ENCODE measurements at regions of chr10 and their contacts with region 1.

Region 1: GRCh38 chr10:6445501-6446316 is 134.4 kb downstream of the PRKCQ start:
- DNase-seq: peak; percentile 80
- ATAC-seq: peak; percentile 67
- H3K4me3 Mint-ChIP-seq: no peak overlapping the region
- H3K27ac Mint-ChIP-seq: peak overlapping the region; percentile 0
- H3K4me1 Mint-ChIP-seq: peaks cover 39% of the 10 kb centered on the region
- H3K27me3 Mint-ChIP-seq: no peaks in the 10 kb centered on the region

Region 2: GRCh38 chr10:6473901-6474370 is 28.2 kb after region 1 on chr10:
- CTCF ChIA-PET with region 1: interaction called, 20 read pairs
- POLR2A ChIA-PET with region 1: no interaction called
- DNase-seq: peak; percentile 59
- ATAC-seq: peak; percentile 86
- H3K4me3 Mint-ChIP-seq: peak overlapping the region; percentile 90
- H3K27ac Mint-ChIP-seq: peak overlapping the region; percentile 99
- H3K4me1 Mint-ChIP-seq: peaks cover 64% of the 10 kb centered on the region
- H3K27me3 Mint-ChIP-seq: no peaks in the 10 kb centered on the region

Region 3: GRCh38 chr10:6507311-6507710 is 61.6 kb after region 1 on chr10:
- CTCF ChIA-PET with region 1: no interaction called
- POLR2A ChIA-PET with region 1: no interaction called
- DNase-seq: peak; percentile 67
- ATAC-seq: peak; percentile 82
- H3K4me3 Mint-ChIP-seq: no peak overlapping the region
- H3K27ac Mint-ChIP-seq: peak overlapping the region; percentile 87
- H3K4me1 Mint-ChIP-seq: peaks cover 61% of the 10 kb centered on the region
- H3K27me3 Mint-ChIP-seq: no peaks in the 10 kb centered on the region

Region 4: GRCh38 chr10:6563075-6563474 is 117.4 kb after region 1 on chr10:
- CTCF ChIA-PET with region 1: interaction called, 14 read pairs
- POLR2A ChIA-PET with region 1: no interaction called
- DNase-seq: peak; percentile 67
- ATAC-seq: peak; percentile 82
- H3K4me3 Mint-ChIP-seq: peak overlapping the region; percentile 75
- H3K27ac Mint-ChIP-seq: peak overlapping the region; percentile 92
- H3K4me1 Mint-ChIP-seq: peaks cover 89% of the 10 kb centered on the region
- H3K27me3 Mint-ChIP-seq: no peaks in the 10 kb centered on the region

Region 5: DNA sequence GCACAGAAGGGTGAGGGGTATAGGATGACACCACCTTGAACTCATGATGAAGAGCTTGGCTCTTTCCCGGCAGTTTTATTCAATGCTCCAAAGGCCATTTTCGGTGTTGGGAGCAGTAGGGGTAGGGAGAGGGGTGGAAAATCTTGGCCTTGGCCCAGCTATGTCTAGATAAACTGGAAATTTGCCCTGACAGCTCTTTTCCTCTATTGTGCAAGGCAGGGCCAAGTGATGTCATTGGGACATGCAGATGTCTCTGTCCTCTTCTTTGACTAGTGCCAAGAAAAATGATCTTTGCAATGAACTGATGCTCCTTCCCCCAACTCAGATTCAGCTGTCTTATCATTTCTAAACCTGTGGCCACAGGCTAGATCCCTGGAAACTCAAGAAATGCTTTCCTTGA is 162.1 kb after region 1 on chr10:
- CTCF ChIA-PET with region 1: interaction called, 10 read pairs
- POLR2A ChIA-PET with region 1: no interaction called
- DNase-seq: no peak
- ATAC-seq: no peak
- H3K4me3 Mint-ChIP-seq: no peak overlapping the region
- H3K27ac Mint-ChIP-seq: peak overlapping the region; percentile 87
- H3K4me1 Mint-ChIP-seq: peaks cover 78% of the 10 kb centered on the region
- H3K27me3 Mint-ChIP-seq: no peaks in the 10 kb centered on the region

Region 6: DNA sequence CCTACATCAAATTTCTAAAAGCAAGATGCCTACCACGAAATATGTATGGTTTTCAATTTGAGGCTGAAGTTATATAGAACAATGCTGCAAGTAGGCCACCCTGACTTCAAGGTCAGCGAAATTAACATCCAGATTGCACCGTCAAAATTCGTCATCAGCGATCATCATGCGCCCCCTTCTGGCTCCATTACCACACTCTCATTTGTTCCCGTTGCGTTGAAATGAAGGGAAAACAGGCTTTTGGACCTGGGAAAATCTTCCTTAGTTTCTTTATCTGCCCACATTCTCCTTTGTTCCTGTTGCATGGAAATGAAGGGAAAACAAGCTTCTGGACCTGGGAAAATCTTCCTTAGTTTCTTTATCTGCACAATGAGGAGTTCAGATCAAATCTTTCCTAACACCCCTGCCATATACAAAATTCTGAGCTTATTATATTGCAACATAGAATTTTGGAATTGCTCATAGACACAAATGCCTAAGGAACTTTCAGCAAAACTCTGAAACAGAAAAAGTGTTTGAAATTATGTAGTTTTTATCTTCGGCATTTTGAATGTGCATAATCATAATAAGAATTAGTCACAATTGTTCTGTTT is 232.6 kb after region 1 on chr10:
- CTCF ChIA-PET with region 1: interaction called, 11 read pairs
- POLR2A ChIA-PET with region 1: no interaction called
- DNase-seq: peak; percentile 76
- ATAC-seq: peak; percentile 68
- H3K4me3 Mint-ChIP-seq: no peak overlapping the region
- H3K27ac Mint-ChIP-seq: no peak overlapping the region
- H3K4me1 Mint-ChIP-seq: peaks cover 10% of the 10 kb centered on the region
- H3K27me3 Mint-ChIP-seq: peaks cover 52% of the 10 kb centered on the region